Heart right ventricle (tissue), 16 donors: ENCODE measurements at regions of chr3 and their contacts with region 1.

Region 1: GRCh38 chr3:100245927-100246326 is 14.9 kb upstream of the TBC1D23 start:
- DNase-seq: no peak
- ATAC-seq: no peak
- H3K4me3 ChIP-seq: no peak overlapping the region
- H3K27ac ChIP-seq: no peak overlapping the region
- H3K4me1 ChIP-seq: no peaks in the 10 kb centered on the region
- H3K27me3 ChIP-seq: no peaks in the 10 kb centered on the region
- CTCF ChIP-seq: no peak

Region 2: DNA sequence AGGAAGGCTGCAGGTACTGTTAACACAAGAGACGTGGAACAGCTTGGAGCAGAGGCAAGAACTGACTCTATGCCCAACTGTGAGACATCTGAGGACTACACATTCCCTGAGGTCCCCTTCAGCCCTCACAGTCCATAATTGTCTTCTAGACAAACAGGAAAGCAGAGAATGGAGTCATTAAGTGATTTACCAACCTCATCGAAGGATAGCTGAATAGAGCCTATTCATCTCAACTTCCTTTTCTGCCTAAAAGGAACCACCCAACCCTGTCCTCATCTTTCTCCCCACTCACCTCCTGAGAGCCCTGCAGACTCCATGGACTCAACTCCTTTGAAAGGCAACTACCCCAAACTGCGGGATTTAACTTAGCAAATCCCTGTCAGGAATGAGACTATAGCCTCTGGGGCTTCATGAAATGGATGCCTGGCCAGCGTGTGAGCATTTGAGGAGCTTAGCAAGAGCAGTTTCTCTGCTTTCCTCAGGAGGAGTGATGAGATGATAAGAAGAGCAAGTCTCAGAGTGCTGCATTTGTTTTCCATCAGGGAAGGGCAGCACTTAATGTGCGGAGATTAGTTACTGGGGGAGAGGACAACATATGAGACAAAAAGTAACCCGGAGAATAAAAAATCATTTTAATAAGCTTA is 70.2 kb before region 1 on chr3:
- intact Hi-C with region 1: loop called in 1 of 10 experiments (anchors 10 kb)
- DNase-seq: no peak
- ATAC-seq: peak in 5 of 8 donors; percentile 16 to 63 (median 39)
- H3K4me3 ChIP-seq: no peak overlapping the region
- H3K27ac ChIP-seq: peak overlapping the region in 4 of 10 donors; percentile 23 to 50 (median 41)
- H3K4me1 ChIP-seq: peaks cover 0 to 21% (median 6%) of the 10 kb centered on the region in 9 donors
- H3K27me3 ChIP-seq: no peaks in the 10 kb centered on the region
- CTCF ChIP-seq: no peak

Region 3: DNA sequence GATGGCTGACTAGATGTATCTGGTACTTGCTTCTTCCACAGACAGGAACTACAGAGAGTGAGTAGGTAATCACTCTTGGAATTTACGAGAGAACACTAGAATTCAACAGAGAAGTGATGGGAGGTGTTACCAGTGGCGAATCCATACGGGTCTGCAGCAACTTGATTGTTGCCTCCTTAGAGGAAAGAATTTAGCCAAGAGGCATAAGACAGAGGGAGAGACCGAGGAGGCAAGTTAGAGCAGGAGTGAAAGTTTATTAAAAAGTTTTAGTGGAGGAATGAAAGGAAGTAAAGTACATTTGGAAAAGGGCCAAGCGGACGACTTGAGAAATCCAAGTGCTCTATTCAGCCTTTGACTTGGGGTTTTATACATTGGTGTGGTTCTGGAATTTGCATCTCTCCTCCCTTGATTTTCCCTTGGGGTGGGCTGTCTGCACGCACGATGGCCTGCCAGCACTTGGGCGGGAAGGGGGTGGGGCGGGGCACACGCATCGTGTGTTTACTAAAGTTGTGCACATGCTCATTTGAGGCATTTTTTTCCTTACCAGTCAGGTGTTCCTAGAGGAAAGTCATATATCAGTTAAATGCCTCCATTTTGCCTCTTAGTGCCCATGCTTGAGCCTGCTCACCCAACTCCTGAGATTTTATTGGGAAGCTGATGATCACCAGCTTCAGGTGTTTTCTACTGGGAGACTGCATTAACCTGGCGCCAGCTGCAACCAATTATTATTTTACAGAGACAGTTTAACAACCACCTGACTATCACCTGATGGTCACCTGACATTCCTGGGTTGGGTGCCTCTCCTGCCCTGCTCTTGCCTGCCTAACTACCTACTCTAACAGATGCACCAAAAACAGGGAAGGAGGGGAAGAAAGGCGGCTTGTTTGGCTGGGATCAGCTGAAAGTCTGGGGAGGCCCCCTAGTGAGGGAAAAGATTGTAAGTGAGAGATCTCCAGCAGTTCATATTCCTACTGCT is 48.7 kb before region 1 on chr3:
- intact Hi-C with region 1: loop called in 1 of 10 experiments (anchors 10 kb)
- DNase-seq: no peak
- ATAC-seq: no peak
- H3K4me3 ChIP-seq: no peak overlapping the region
- H3K27ac ChIP-seq: no peak overlapping the region
- H3K4me1 ChIP-seq: no peaks in the 10 kb centered on the region
- H3K27me3 ChIP-seq: no peaks in the 10 kb centered on the region
- CTCF ChIP-seq: no peak

Region 4: GRCh38 chr3:100913870-100914648 is 668.1 kb after region 1 on chr3:
- intact Hi-C with region 1: no loop called
- DNase-seq: no peak
- ATAC-seq: peak in 5 of 8 donors; percentile 30 to 81 (median 47)
- H3K4me3 ChIP-seq: no peak overlapping the region
- H3K27ac ChIP-seq: peak overlapping the region in 3 of 10 donors; percentile 17 to 29 (median 26)
- H3K4me1 ChIP-seq: peaks cover 0 to 5% (median 0%) of the 10 kb centered on the region in 9 donors
- H3K27me3 ChIP-seq: no peaks in the 10 kb centered on the region
- CTCF ChIP-seq: no peak